Activated CD4-positive, alpha-beta memory T cell treated with anti-CD3 and anti-CD28 coated beads for 36 hours (primary cell): ENCODE measurements at regions of chr4 and their contacts with region 1.

Region 1: DNA sequence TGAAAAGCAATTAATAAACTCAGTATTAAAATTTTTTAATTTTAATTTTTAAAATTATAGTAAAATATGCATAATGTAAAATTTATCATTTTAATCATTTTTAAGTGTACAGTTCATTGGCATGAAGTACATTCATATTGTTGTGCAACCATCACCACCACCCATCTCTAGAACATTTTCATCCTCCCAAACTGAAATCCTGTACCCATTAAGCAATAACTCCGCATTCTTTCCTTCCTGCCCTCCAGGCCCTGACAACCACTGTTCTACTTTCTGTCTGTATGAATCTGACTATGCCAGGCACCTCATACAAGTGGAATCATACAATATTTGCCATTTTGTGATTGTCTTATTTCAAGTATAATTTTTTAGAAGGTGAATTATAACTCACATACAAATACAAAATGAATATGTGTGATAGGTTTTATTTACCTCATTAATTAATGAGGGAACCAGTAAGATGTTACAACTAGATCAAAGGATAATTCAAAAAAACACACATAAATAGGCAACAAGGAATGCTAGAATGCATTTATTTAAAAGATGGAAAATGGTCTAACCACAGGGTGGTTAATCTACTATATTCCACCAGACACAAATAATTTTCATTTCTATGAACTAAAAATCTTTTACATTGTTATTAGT is 13.1 kb upstream of the AFF1 start:
- DNase-seq: no peak
- H3K4me3 Mint-ChIP-seq: no peak overlapping the region
- H3K27ac Mint-ChIP-seq: no peak overlapping the region
- H3K4me1 Mint-ChIP-seq: peaks cover 6% of the 10 kb centered on the region
- H3K27me3 Mint-ChIP-seq: no peaks in the 10 kb centered on the region

Region 2: DNA sequence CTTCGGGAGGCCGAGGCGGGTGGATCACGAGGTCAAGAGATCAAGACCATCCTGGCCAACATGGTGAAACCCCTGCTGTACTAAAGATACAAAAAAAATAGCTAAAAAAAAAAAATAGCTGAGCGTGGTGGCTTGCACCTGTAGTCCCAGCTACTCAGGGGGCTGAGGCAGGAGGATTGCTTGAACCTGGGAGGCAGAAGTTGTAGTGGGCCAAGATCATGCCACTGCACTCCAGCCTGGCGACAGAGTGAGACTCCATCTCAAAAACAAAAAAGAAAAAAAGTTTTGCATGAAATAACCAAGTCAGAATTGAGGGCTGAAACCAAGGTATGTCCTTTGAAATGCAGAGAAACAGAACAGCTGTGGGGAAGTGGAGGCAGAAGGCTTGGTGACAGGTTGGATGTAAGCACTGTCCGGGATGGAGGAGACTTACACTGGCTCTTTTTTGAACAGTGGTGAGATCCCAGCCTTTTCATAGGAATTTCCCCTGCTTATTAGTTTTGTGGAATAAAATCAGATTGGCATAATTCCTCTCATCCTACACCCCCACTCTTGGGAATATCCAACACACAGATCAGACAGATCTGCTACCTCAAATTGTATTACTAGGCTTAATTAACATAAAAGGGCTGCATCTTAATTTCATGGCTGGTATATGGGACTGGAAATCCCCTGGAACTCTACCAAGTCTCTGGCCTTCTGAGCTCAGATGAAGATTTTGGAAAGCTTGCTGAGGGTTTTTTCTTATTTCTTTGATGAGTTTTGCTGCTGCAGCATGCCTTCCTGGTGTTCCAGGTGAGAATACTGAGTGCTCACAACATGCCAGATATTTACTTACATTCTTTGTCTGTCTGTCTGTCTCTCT is 10.7 kb before region 1 on chr4:
- CTCF ChIA-PET with region 1: interaction called, 12 read pairs
- POLR2A ChIA-PET with region 1: no interaction called
- intact Hi-C with region 1: no loop called
- DNase-seq: no peak
- H3K4me3 Mint-ChIP-seq: no peak overlapping the region
- H3K27ac Mint-ChIP-seq: no peak overlapping the region
- H3K4me1 Mint-ChIP-seq: peaks cover 14% of the 10 kb centered on the region
- H3K27me3 Mint-ChIP-seq: no peaks in the 10 kb centered on the region

Region 3: GRCh38 chr4:87103691-87104187 is 182.0 kb after region 1 on chr4:
- CTCF ChIA-PET with region 1: interaction called, 37 read pairs
- POLR2A ChIA-PET with region 1: no interaction called
- intact Hi-C with region 1: no loop called
- DNase-seq: no peak
- H3K4me3 Mint-ChIP-seq: peak overlapping the region; percentile 57
- H3K27ac Mint-ChIP-seq: peak overlapping the region; percentile 84
- H3K4me1 Mint-ChIP-seq: peaks cover 72% of the 10 kb centered on the region
- H3K27me3 Mint-ChIP-seq: no peaks in the 10 kb centered on the region

Region 4: GRCh38 chr4:87150498-87151261 is 228.9 kb after region 1 on chr4:
- CTCF ChIA-PET with region 1: interaction called, 44 read pairs
- POLR2A ChIA-PET with region 1: no interaction called
- intact Hi-C with region 1: loop called (anchors 1 kb)
- DNase-seq: no peak
- H3K4me3 Mint-ChIP-seq: no peak overlapping the region
- H3K27ac Mint-ChIP-seq: no peak overlapping the region
- H3K4me1 Mint-ChIP-seq: no peaks in the 10 kb centered on the region
- H3K27me3 Mint-ChIP-seq: no peaks in the 10 kb centered on the region